Endothelial cell of umbilical vein (primary cell): ENCODE measurements at regions of chr7 and their contacts with region 1.

Region 1: GRCh38 chr7:120792091-120792860 is 65.7 kb downstream of the TSPAN12 start:
- DNase-seq: peak; percentile 72
- H3K4me3 ChIP-seq: no peak overlapping the region
- H3K27ac ChIP-seq: no peak overlapping the region
- H3K4me1 ChIP-seq: peaks cover 8% of the 10 kb centered on the region
- H3K27me3 ChIP-seq: no peaks in the 10 kb centered on the region
- CTCF ChIP-seq: peak; percentile 95
- POLR2A ChIP-seq: no peak

Region 2: DNA sequence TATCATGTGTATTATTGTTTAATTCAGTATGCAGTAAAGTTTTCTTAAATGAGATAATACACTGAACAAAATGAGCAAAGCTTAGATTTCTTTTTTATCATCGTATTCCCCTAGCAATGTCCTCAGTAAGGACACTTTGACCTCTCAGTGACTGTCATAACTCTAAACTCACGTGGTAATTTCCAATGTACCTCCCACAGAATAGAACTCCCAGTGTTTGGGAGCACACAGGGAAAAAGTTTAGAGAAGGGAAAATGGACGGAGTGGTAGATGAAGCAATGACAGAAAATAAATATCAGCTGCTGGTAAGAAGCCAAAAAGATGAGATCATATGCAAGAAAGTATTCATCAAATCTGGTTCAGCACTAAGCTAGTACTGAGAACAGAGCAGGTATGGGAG is 1278.0 kb before region 1 on chr7:
- CTCF ChIA-PET with region 1: no interaction called
- POLR2A ChIA-PET with region 1: no interaction called
- dilution Hi-C with region 1: no loop called
- intact Hi-C with region 1: no loop called
- DNase-seq: no peak
- H3K4me3 ChIP-seq: no peak overlapping the region
- H3K27ac ChIP-seq: no peak overlapping the region
- H3K4me1 ChIP-seq: no peaks in the 10 kb centered on the region
- H3K27me3 ChIP-seq: no peaks in the 10 kb centered on the region
- CTCF ChIP-seq: no peak
- POLR2A ChIP-seq: no peak

Region 3: GRCh38 chr7:120554960-120555571 is 237.2 kb before region 1 on chr7:
- CTCF ChIA-PET with region 1: no interaction called
- POLR2A ChIA-PET with region 1: no interaction called
- dilution Hi-C with region 1: no loop called
- intact Hi-C with region 1: no loop called
- DNase-seq: peak; percentile 60
- H3K4me3 ChIP-seq: no peak overlapping the region
- H3K27ac ChIP-seq: no peak overlapping the region
- H3K4me1 ChIP-seq: no peaks in the 10 kb centered on the region
- H3K27me3 ChIP-seq: peaks cover 0 to 7% of the 10 kb centered on the region in 2 experiments
- CTCF ChIP-seq: peak; percentile 57 to 59
- POLR2A ChIP-seq: no peak

Region 4: DNA sequence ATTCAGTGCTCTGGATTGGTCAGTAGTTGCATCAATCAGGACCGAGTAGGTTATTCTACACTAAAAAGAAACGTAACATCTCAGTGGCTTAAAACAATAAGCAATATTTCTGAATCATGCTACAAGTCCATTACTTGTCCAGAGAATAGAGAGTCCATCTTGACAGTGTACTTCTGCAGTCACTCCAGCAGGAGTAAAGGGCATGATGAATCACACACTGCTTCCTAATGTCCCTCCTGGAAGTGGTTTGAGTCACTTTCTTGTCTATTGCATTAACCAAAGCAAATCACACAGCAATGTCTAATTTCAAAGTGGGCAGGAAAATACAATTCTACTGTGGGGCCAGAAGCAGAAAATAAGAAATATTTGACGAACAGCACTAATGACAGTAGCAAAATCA is 59.1 kb before region 1 on chr7:
- CTCF ChIA-PET with region 1: interaction called, 10 read pairs
- POLR2A ChIA-PET with region 1: no interaction called
- dilution Hi-C with region 1: no loop called
- intact Hi-C with region 1: no loop called
- DNase-seq: peak; percentile 27
- H3K4me3 ChIP-seq: no peak overlapping the region
- H3K27ac ChIP-seq: no peak overlapping the region
- H3K4me1 ChIP-seq: no peaks in the 10 kb centered on the region
- H3K27me3 ChIP-seq: no peaks in the 10 kb centered on the region
- CTCF ChIP-seq: no peak
- POLR2A ChIP-seq: no peak

Region 5: DNA sequence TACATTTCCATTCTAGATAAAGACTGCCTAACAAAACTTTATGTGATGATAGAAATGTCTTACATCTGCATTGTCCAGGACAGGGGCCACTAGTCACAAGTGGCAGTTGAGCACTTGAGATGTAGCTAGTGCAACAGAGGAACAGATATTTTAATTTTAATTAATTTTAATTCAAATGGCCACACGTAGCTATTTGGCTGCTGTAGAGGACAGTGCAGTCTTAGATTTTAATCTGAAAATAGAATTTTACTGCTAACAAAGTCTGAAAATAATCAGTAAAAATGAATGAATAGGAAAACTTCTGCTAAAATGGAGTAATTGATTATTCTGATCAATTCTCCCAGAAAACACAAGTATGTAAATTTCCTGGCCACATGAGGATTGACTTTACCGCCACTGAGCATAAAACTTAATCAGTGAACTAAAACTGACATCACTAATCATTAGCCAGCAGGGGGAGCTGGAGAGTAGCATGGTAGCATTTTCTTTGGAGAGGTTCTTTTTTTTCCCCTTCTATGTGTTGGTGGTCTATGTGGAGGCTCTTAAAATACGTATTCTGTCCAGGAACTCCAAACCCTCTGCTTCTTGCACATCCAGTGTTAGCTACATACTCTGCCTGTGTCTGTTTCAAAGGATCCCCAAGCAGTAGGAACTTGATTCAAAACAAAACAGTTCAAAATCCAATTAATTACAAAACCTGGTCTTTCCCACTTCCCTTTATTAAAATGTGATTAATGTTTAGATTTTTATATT is 13.5 kb after region 1 on chr7:
- CTCF ChIA-PET with region 1: interaction called, 50 read pairs
- POLR2A ChIA-PET with region 1: no interaction called
- dilution Hi-C with region 1: no loop called
- intact Hi-C with region 1: no loop called
- DNase-seq: peak; percentile 80
- H3K4me3 ChIP-seq: no peak overlapping the region
- H3K27ac ChIP-seq: no peak overlapping the region
- H3K4me1 ChIP-seq: peaks cover 12% of the 10 kb centered on the region
- H3K27me3 ChIP-seq: no peaks in the 10 kb centered on the region
- CTCF ChIP-seq: peak; percentile 67 to 77
- POLR2A ChIP-seq: no peak

Region 6: DNA sequence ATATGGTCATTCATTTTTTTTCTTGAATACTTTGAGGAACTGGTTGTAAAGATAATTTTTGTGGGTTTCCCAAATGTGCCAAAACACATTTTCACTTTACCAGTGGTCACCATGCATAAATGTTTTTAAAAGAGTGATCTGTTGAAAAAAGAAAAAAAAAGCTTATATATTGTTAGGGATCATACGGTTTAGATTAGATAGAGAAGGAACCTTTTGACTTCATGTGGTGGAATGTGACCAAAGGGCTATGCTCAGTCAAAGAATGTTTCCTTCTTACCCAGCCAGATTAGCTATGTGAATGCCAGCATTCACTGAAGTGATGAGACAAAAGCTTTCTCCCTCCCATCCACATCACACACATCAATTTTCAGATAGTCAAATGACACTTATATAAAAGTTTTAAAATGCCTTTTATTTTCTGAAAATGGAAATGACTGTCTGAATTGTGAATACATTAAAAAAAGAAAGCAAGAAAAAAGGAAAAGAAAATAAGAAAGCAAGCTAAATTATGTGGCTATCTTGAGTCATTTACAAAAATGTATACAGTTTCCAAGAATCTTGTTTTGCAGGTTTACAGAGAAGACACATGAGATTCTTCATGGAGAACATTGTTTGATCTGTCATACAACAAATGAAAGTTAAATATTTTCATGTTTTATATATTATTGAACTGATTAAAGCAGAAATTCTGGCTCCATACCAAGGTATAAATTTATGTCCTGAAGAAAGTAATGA is 187.7 kb after region 1 on chr7:
- CTCF ChIA-PET with region 1: interaction called, 18 read pairs
- POLR2A ChIA-PET with region 1: no interaction called
- dilution Hi-C with region 1: no loop called
- intact Hi-C with region 1: no loop called
- DNase-seq: no peak
- H3K4me3 ChIP-seq: no peak overlapping the region
- H3K27ac ChIP-seq: no peak overlapping the region
- H3K4me1 ChIP-seq: no peaks in the 10 kb centered on the region
- H3K27me3 ChIP-seq: no peaks in the 10 kb centered on the region
- CTCF ChIP-seq: no peak
- POLR2A ChIP-seq: no peak

Region 7: DNA sequence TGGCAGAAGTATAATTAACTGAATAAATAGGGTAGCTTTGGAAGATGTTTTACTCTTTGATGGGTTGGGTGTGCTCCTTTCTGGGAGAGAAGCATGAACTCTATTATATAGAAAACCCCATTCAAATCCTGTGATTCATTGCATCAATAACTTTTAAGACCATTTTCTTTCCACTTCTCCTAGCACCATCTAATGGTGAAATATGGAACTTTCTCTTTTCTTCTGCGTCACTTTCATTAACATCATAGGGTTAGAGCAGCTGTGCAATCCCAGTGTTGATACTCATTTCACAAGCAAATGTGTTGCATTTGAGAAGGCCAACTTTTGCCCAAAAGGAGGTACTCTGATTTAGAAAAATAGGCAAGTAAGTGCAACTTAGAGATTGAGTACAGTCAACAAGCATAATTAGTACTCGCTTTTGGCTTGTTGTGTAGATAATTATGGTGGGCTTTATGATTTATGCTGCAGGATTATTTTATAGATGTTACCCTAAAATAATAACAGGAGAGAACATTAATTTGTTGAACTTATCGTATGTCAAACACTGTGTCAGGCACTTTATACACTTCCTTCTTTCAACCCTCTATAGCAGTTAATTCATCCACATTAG is 289.2 kb after region 1 on chr7:
- CTCF ChIA-PET with region 1: interaction called, 38 read pairs
- POLR2A ChIA-PET with region 1: no interaction called
- dilution Hi-C with region 1: no loop called
- intact Hi-C with region 1: loop called (anchors 1 kb)
- DNase-seq: peak; percentile 77
- H3K4me3 ChIP-seq: no peak overlapping the region
- H3K27ac ChIP-seq: no peak overlapping the region
- H3K4me1 ChIP-seq: peaks cover 24% of the 10 kb centered on the region
- H3K27me3 ChIP-seq: no peaks in the 10 kb centered on the region
- CTCF ChIP-seq: peak; percentile 40 to 44
- POLR2A ChIP-seq: no peak

Region 8: GRCh38 chr7:121107923-121108498 is 315.7 kb after region 1 on chr7:
- CTCF ChIA-PET with region 1: interaction called, 82 read pairs
- POLR2A ChIA-PET with region 1: interaction called, 3 read pairs
- dilution Hi-C with region 1: no loop called
- intact Hi-C with region 1: loop called (anchors 1 kb)
- DNase-seq: peak; percentile 78
- H3K4me3 ChIP-seq: no peak overlapping the region
- H3K27ac ChIP-seq: no peak overlapping the region
- H3K4me1 ChIP-seq: no peaks in the 10 kb centered on the region
- H3K27me3 ChIP-seq: peaks cover 12 to 16% of the 10 kb centered on the region in 2 experiments
- CTCF ChIP-seq: peak; percentile 57 to 59
- POLR2A ChIP-seq: no peak